Activated CD8-positive, alpha-beta memory T cell treated with anti-CD3 and anti-CD28 coated beads, Interleukin-2, amount 10 ng/mL, durations not matched to agents 7 days and 5 days (primary cell): ENCODE measurements at regions of chr2 and their contacts with region 1.

Region 1: GRCh38 chr2:101419096-101419663 is 31.9 kb upstream of the CREG2 start:
- DNase-seq: peak; percentile 70
- ATAC-seq: peak; percentile 45
- H3K4me3 Mint-ChIP-seq: no peak overlapping the region
- H3K27ac Mint-ChIP-seq: no peak overlapping the region
- H3K4me1 Mint-ChIP-seq: no peaks in the 10 kb centered on the region
- H3K27me3 Mint-ChIP-seq: peaks cover 3% of the 10 kb centered on the region

Region 2: DNA sequence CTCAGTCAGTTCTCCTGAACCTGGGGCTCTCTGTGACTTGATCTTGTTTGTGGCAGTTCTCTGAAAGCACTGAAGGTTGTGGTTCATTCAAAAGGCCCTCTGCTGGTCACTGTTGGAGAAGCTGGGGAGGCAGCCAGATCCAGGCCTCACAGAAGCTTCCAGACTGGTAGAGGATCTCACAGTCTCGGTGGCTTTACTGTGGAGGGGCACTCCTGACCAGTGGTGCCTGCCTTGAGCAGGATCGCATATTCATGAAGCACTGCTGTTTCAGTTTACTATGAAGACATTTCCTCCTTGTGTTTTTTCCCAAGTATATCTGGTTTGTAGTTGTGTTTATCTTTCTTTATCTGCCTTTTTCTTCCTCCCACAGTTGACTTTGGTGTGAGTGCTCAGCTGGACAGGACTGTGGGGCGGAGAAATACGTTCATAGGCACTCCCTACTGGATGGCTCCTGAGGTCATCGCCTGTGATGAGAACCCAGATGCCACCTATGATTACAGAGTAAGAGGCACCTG is 412.2 kb after region 1 on chr2:
- CTCF ChIA-PET with region 1: interaction called, 36 read pairs
- DNase-seq: peak; percentile 76
- ATAC-seq: peak; percentile 82
- H3K4me3 Mint-ChIP-seq: no peak overlapping the region
- H3K27ac Mint-ChIP-seq: peak overlapping the region; percentile 54
- H3K4me1 Mint-ChIP-seq: peaks cover 51% of the 10 kb centered on the region
- H3K27me3 Mint-ChIP-seq: no peaks in the 10 kb centered on the region